HepG2 (cell line): ENCODE measurements at regions of chr1 and their contacts with region 1.

Region 1: GRCh38 chr1:9539165-9539828 is at the start of gene SLC25A33:
- DNase-seq: peak; percentile 92
- ATAC-seq: peak; percentile 91
- H3K4me3 ChIP-seq: peak within 1 kb of the TSS; percentile 76 to 97 (median 92)
- H3K27ac ChIP-seq: peak within 1 kb of the TSS; percentile 86
- H3K4me1 ChIP-seq: peaks cover 61% of the 10 kb centered on the region
- H3K27me3 ChIP-seq: no peaks in the 10 kb centered on the region
- CTCF ChIP-seq: peak; percentile 8; the same call in 1 of the 2 replicates
- EP300 ChIP-seq: no peak
- POLR2A ChIP-seq: peak; percentile 81 to 84
- RAD21 ChIP-seq: peak; percentile 47; the same call in 1 of the 2 replicates
- total RNA-seq, gene SLC25A33: 48.6 and 50.3 TPM in 2 replicates

Region 2: DNA sequence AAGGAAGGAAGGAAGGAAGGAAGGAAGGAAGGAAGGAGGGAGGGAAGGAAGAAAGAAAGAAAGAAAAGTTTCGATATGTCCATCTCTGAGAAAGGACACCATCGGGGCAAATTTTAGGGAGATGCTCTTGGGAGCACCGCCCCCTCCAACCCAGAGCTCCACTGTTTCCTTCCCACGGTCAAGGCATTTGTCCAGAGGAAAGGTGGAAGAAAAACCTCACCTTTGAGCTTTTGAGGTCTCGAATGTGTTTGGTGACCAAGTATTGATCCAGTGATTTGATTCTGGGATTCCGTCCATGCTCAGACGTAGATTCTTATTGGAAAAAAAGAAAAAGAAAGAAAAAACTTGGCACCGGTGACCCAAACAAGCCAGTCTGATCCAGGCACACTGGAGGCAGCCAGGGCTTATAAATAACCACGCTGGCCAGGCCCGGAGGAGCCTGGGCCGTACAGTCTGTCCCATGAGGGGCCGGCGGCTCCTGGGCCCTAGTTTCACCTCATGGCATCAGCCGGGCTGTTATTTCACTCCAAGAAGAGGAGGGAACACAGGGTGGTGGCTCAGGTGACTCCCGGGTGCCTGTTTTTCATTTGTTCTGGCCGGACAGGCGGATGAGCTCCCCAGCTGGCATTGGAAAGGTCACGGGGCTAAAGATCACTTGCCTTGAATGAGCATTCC is 36.2 kb before region 1 on chr1:
- CTCF ChIA-PET with region 1: no interaction called
- POLR2A ChIA-PET with region 1: interaction called, 13 read pairs
- in situ Hi-C with region 1: no loop called
- intact Hi-C with region 1: loop called (anchors 5 kb)
- DNase-seq: peak; percentile 54
- ATAC-seq: peak; percentile 52
- H3K4me3 ChIP-seq: peak overlapping the region; percentile 40 to 66 (median 66)
- H3K27ac ChIP-seq: peak overlapping the region; percentile 46
- H3K4me1 ChIP-seq: peaks cover 79% of the 10 kb centered on the region
- H3K27me3 ChIP-seq: peaks cover 0 to 2% of the 10 kb centered on the region in 2 experiments; a peak in 2 of 5 replicates
- CTCF ChIP-seq: no peak
- EP300 ChIP-seq: no peak
- POLR2A ChIP-seq: no peak
- RAD21 ChIP-seq: no peak

Region 3: DNA sequence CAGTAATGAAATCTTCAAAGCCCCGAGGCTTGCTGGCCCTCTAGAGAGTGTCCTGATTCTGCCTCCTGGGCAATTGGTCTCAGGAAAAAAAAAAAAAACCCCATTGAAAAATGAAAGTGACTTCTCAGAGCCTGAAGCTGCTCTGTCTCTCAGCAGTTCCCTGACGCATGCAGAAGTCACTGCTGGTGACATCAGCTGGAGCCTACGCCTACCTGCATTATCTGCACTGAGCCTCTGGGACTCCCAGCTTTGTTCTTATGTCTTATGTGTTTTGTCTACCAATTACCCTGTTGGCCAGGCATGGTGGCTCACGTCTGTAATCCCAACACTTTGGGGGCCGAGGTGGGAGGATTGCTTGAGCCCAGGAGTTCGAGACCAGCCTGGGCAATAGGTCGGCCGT is 10.1 kb before region 1 on chr1:
- CTCF ChIA-PET with region 1: no interaction called
- POLR2A ChIA-PET with region 1: interaction called, 16 read pairs
- in situ Hi-C with region 1: no loop called
- intact Hi-C with region 1: no loop called
- DNase-seq: no peak
- ATAC-seq: peak; percentile 46; the same call in 1 of the 3 replicates
- H3K4me3 ChIP-seq: peak overlapping the region in 1 of 3 experiments; percentile 48; a peak in 2 of 6 replicates
- H3K27ac ChIP-seq: no peak overlapping the region
- H3K4me1 ChIP-seq: peaks cover 67% of the 10 kb centered on the region
- H3K27me3 ChIP-seq: peaks cover 0 to 1% of the 10 kb centered on the region in 2 experiments; a peak in 1 of 5 replicates
- CTCF ChIP-seq: no peak
- EP300 ChIP-seq: no peak
- POLR2A ChIP-seq: no peak
- RAD21 ChIP-seq: no peak

Region 4: DNA sequence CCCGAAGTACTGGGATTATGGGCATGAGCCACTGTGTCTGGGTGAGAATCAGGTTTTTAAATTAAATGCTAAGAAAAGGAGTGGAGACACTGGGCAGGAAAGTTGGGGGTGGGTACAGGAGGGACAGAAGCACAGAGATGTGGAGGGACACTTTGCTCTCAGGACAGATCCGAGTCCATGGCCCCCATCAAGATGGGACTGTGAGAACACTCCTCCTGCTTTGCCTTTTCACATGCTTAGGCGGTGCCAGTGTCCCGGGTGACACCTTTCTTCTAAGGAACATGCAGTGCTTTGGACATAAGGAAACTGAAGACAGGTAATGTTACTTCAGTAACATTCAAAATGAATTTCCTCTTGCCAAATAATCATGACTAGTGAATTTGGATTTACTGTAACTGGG is 16.6 kb after region 1 on chr1:
- CTCF ChIA-PET with region 1: no interaction called
- POLR2A ChIA-PET with region 1: interaction called, 82 read pairs
- in situ Hi-C with region 1: no loop called
- intact Hi-C with region 1: no loop called
- DNase-seq: no peak
- ATAC-seq: no peak
- H3K4me3 ChIP-seq: no peak overlapping the region
- H3K27ac ChIP-seq: peak overlapping the region; percentile 30
- H3K4me1 ChIP-seq: peaks cover 97% of the 10 kb centered on the region
- H3K27me3 ChIP-seq: no peaks in the 10 kb centered on the region
- CTCF ChIP-seq: no peak
- EP300 ChIP-seq: no peak
- POLR2A ChIP-seq: no peak
- RAD21 ChIP-seq: no peak